ENCODE measurements at regions of chrX and their contacts with region 1.

Region 1: GRCh38 chrX:19904778-19905367 is 17.5 kb upstream of the SH3KBP1 start:
- DNase-seq: peak; percentile 40 to 52 (median 42)
- H3K4me3 ChIP-seq: no peak overlapping the region
- H3K4me3 Mint-ChIP-seq: no peak overlapping the region
- H3K27ac ChIP-seq: no peak overlapping the region
- H3K27ac Mint-ChIP-seq: peak overlapping the region in 1 of 7 donors; percentile 45
- H3K4me1 ChIP-seq: no peaks in the 10 kb centered on the region
- H3K4me1 Mint-ChIP-seq: peaks cover 4 to 12% (median 8%) of the 10 kb centered on the region in 4 donors
- H3K27me3 ChIP-seq: no peaks in the 10 kb centered on the region
- H3K27me3 Mint-ChIP-seq: no peaks in the 10 kb centered on the region

Region 2: DNA sequence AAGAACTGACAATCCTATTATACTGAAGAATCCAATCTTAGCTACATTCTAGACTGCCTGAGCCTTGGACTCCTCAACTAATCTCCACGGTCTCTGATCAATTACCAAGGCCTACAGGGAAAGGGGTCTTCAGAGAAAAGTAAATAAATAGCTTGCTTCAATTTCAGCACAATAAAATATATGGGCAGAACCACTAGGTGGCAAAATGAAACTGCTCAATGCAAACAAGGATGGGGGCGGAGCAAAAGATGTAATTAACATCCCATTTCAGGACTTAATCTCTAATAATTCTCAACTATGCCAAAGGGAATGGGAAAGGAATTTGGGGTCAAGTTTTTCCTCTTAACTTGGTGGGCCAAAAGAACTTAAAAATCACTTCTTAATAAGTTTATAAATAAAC is 311.2 kb before region 1 on chrX:
- CTCF ChIA-PET with region 1: no interaction called
- POLR2A ChIA-PET with region 1: no interaction called
- intact Hi-C with region 1: loop called (anchors 5 kb)
- DNase-seq: peak in 4 of 5 donors; percentile 22 to 36 (median 34)
- H3K4me3 ChIP-seq: no peak overlapping the region
- H3K4me3 Mint-ChIP-seq: no peak overlapping the region
- H3K27ac ChIP-seq: no peak overlapping the region
- H3K27ac Mint-ChIP-seq: peak overlapping the region in 5 of 7 donors; percentile 3 to 39 (median 31)
- H3K4me1 ChIP-seq: no peaks in the 10 kb centered on the region
- H3K4me1 Mint-ChIP-seq: peaks cover 6 to 20% (median 17%) of the 10 kb centered on the region in 4 donors
- H3K27me3 ChIP-seq: no peaks in the 10 kb centered on the region
- H3K27me3 Mint-ChIP-seq: no peaks in the 10 kb centered on the region

Region 3: GRCh38 chrX:19990556-19991349 is 85.9 kb after region 1 on chrX and contains the start of gene BCLAF3:
- CTCF ChIA-PET with region 1: interaction called, 17 read pairs
- POLR2A ChIA-PET with region 1: no interaction called
- intact Hi-C with region 1: loop called (anchors 1 kb)
- DNase-seq: peak; percentile 80 to 82 (median 81)
- H3K4me3 ChIP-seq: peak within 1 kb of the TSS in 1 of 2 donors; percentile 62
- H3K4me3 Mint-ChIP-seq: peak within 1 kb of the TSS; percentile 83 to 95 (median 90)
- H3K27ac ChIP-seq: peak within 1 kb of the TSS; percentile 70
- H3K27ac Mint-ChIP-seq: peak within 1 kb of the TSS; percentile 68 to 97 (median 94)
- H3K4me1 ChIP-seq: peaks cover 10% of the 10 kb centered on the region
- H3K4me1 Mint-ChIP-seq: peaks cover 10 to 31% (median 20%) of the 10 kb centered on the region in 4 donors
- H3K27me3 ChIP-seq: no peaks in the 10 kb centered on the region
- H3K27me3 Mint-ChIP-seq: no peaks in the 10 kb centered on the region
- total RNA-seq, gene BCLAF3: 12.6 to 15.0 TPM

Region 4: GRCh38 chrX:20066968-20067708 is 162.3 kb after region 1 on chrX:
- CTCF ChIA-PET with region 1: interaction called, 24 read pairs
- POLR2A ChIA-PET with region 1: no interaction called
- intact Hi-C with region 1: loop called (anchors 1 kb)
- DNase-seq: peak in 4 of 5 donors; percentile 24 to 31 (median 26)
- H3K4me3 ChIP-seq: no peak overlapping the region
- H3K4me3 Mint-ChIP-seq: no peak overlapping the region
- H3K27ac ChIP-seq: no peak overlapping the region
- H3K27ac Mint-ChIP-seq: peak overlapping the region in 1 of 7 donors; percentile 76
- H3K4me1 ChIP-seq: no peaks in the 10 kb centered on the region
- H3K4me1 Mint-ChIP-seq: no peaks in the 10 kb centered on the region
- H3K27me3 ChIP-seq: no peaks in the 10 kb centered on the region
- H3K27me3 Mint-ChIP-seq: no peaks in the 10 kb centered on the region

Region 5: GRCh38 chrX:20128670-20129069 is 223.8 kb after region 1 on chrX:
- CTCF ChIA-PET with region 1: interaction called, 5 read pairs
- POLR2A ChIA-PET with region 1: no interaction called
- intact Hi-C with region 1: loop called (anchors 5 kb)
- DNase-seq: no peak
- H3K4me3 ChIP-seq: no peak overlapping the region
- H3K4me3 Mint-ChIP-seq: no peak overlapping the region
- H3K27ac ChIP-seq: no peak overlapping the region
- H3K27ac Mint-ChIP-seq: peak overlapping the region in 2 of 7 donors; percentile 68 to 88
- H3K4me1 ChIP-seq: no peaks in the 10 kb centered on the region
- H3K4me1 Mint-ChIP-seq: peaks cover 0 to 10% (median 3%) of the 10 kb centered on the region in 4 donors
- H3K27me3 ChIP-seq: no peaks in the 10 kb centered on the region
- H3K27me3 Mint-ChIP-seq: no peaks in the 10 kb centered on the region